ENCODE measurements at regions of chr18 and their contacts with region 1.

Region 1: GRCh38 chr18:50143295-50143694 is 51.7 kb downstream of the MYO5B start:
- DNase-seq: no peak
- H3K4me3 ChIP-seq: no peak overlapping the region
- H3K27ac ChIP-seq: peak overlapping the region; percentile 19
- H3K4me1 ChIP-seq: peaks cover 32% of the 10 kb centered on the region
- H3K27me3 ChIP-seq: no peaks in the 10 kb centered on the region
- CTCF ChIP-seq: peak; percentile 12 to 18

Region 2: GRCh38 chr18:50091509-50092244 is 51.6 kb before region 1 on chr18:
- CTCF ChIA-PET with region 1: no interaction called
- dilution Hi-C with region 1: loop called (anchors 5 kb)
- in situ Hi-C with region 1: no loop called
- intact Hi-C with region 1: no loop called
- DNase-seq: no peak
- H3K4me3 ChIP-seq: no peak overlapping the region
- H3K27ac ChIP-seq: no peak overlapping the region
- H3K4me1 ChIP-seq: peaks cover 3% of the 10 kb centered on the region
- H3K27me3 ChIP-seq: no peaks in the 10 kb centered on the region
- CTCF ChIP-seq: no peak

Region 3: DNA sequence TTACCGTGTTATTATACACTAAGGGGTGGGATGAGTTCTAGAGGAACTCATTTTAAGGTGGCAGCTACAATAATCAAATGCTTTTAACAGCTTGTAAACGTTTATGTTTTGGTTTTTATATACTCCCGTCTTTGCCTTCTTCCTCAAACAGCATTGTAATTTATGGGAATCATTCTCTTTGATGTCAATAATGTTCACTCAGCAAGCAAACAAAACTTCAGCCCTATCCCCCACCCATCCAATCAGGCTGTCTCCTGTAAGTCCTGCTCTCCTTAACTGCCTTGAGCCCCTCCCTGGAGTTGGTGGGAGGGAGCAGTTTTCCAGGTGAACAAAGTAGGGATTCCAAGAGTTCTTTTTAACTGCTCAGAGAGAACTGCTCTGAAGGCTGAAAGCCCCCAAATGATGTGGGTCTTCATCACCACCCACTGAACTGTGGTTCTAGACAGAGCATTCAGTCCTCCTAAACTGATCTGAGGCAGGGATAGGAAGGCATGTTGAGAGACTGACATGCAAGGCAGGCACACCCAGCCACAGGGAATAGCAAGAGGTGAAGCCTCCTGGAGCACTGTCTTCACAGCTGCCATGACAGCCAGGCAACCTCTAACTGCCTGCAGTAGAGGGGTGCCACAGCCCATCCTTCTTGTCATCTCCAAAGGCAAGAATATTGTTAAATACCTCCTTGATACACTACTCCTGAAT is 34.1 kb after region 1 on chr18:
- CTCF ChIA-PET with region 1: no interaction called
- dilution Hi-C with region 1: loop called (anchors 5 kb)
- in situ Hi-C with region 1: no loop called
- intact Hi-C with region 1: no loop called
- DNase-seq: no peak
- H3K4me3 ChIP-seq: no peak overlapping the region
- H3K27ac ChIP-seq: no peak overlapping the region
- H3K4me1 ChIP-seq: peaks cover 1% of the 10 kb centered on the region
- H3K27me3 ChIP-seq: no peaks in the 10 kb centered on the region
- CTCF ChIP-seq: no peak